ENCODE measurements at regions of chr5 and their contacts with region 1.

Region 1: DNA sequence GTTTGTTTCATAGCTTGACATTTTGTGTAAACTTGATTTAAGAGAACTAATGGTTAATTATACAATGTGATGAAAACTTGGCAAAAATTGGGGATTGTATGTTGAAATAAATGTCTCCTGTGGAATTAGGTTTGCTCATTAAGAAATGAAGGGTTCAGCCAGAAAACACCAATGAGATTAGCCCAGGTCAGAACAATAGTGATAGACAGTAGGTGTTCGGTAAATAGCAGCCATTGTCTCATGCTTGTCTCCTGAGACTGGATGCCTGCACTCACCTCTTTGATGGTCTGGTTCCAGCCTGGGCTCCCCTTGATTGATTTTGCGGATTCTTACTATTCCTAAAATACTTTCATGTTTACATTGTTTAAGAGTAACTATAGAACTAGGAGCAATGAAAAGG is 135.5 kb downstream of the FBN2 start:
- DNase-seq: no peak
- ATAC-seq: no peak
- H3K4me3 ChIP-seq: no peak overlapping the region
- H3K27ac ChIP-seq: no peak overlapping the region
- H3K4me1 ChIP-seq: peaks cover 0 to 19% (median 0%) of the 10 kb centered on the region in 9 donors
- H3K27me3 ChIP-seq: no peaks in the 10 kb centered on the region
- CTCF ChIP-seq: no peak

Region 2: DNA sequence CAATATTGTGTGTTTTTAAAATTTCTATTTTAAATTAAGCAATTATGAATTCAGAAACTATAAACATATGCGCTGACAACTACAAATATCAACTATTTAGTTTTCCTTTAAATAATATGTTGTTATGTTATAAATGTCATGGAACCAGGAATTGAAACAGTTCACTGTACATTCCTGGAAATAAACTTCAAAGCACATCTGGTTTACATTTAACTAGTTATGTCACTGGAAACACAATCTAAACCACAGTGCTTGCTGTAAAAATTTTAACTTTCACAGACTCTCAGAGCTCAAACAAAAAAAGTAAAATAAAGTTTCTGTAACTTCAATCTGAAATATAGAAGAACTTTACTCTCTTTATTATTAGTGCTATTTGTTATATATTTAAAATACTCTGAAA is 43.7 kb before region 1 on chr5:
- intact Hi-C with region 1: no loop called
- DNase-seq: no peak
- ATAC-seq: no peak
- H3K4me3 ChIP-seq: no peak overlapping the region
- H3K27ac ChIP-seq: no peak overlapping the region
- H3K4me1 ChIP-seq: peaks cover 0 to 7% (median 0%) of the 10 kb centered on the region in 9 donors
- H3K27me3 ChIP-seq: no peaks in the 10 kb centered on the region
- CTCF ChIP-seq: no peak

Region 3: DNA sequence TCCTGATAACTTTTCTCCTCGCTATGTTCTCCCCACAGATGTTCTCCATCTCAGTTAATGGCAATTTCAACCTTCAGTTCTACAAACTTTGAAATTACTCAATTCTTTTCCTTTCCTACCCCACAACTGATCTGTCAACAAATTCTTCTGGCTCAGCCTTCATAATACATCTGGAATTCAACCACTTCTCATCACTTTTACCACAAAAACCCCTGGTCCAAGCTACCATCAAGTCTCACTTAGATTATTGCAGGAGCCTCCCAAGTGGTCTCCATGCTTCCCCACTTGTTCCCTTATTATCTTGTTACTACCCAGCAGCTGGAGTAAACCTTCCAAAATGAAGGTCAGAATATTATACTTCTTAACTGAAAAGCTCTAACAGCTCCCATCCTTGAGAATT is 25.4 kb after region 1 on chr5:
- intact Hi-C with region 1: loop called in 1 of 10 experiments (anchors 1 kb)
- DNase-seq: no peak
- ATAC-seq: no peak
- H3K4me3 ChIP-seq: no peak overlapping the region
- H3K27ac ChIP-seq: no peak overlapping the region
- H3K4me1 ChIP-seq: no peaks in the 10 kb centered on the region
- H3K27me3 ChIP-seq: no peaks in the 10 kb centered on the region
- CTCF ChIP-seq: no peak